Ovary (tissue), 10 donors: ENCODE measurements at regions of chr12 and their contacts with region 1.

Region 1: DNA sequence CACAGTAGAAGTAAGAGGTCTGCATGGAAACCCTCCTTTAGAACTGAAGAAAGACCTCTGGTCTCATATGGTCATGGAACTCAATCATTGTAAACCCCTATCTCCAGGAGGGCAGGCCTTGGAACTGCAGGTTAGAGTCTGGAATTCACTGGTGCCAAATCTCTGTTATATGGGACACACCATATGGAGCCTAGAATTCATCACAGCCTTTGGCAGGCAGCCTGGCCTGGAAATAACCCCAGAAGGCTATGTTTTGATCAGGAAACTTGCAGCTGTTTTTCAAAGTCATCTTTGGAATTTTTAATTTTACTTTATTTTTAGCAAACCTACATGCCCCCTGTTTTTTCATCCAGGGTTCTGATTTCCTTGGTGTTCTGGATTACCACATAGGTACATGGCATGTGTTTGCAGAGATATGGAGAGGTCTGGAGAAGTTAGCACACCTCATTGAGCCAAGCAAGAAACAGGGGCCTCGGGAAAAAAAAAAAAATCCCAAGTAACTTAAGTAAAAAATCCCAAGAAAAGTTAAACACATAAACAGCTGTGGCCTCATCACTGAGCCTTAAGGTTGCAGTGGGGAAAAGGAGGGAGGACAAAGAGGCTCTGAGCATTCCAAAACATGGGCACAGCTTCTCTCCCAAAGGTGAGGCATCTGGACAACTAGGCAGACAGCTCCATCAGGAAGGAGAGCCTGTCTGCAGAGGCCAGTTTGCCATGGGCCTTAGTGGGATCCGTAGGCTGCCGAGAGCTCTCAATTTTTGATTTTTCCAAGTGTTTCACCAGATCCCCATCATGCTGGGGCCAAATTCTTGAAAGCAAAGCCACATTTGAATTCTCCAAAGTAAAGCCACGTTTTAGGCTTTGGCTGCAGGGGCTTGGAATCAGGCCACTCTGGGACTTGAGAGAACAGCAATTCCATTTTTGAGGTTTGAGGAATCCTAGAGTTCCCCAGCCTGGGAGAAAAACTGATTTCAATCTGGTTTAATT is 339.6 kb upstream of the TBX3 start:
- DNase-seq: peak in 3 of 5 donors; percentile 16 to 51 (median 41)
- H3K4me3 ChIP-seq: no peak overlapping the region
- H3K27ac ChIP-seq: no peak overlapping the region
- H3K4me1 ChIP-seq: peaks cover 7% of the 10 kb centered on the region
- H3K27me3 ChIP-seq: no peaks in the 10 kb centered on the region
- CTCF ChIP-seq: no peak
- EP300 ChIP-seq: no peak
- POLR2A ChIP-seq: no peak

Region 2: DNA sequence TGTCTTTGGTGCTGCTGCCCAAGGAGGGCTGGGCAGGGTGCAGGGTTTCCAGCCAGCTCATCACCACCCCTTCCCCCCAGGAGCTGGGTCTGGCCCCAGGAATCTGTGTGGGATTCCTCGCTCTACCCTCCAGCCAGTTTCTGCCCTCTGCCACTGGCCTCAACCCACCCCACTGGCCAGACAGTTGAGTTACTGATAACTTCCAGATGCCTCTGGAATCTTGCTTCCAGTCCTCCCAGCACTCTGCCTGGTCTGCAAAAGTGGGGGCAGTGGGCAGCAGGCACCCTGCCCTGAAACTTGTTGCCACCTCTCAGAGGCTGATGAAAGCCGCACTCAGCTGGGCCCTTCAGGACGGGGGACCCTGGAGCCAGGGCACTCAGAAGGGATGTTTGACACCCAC is 319.5 kb before region 1 on chr12:
- intact Hi-C with region 1: loop called in 1 of 4 experiments (anchors 10 kb)
- DNase-seq: no peak
- H3K4me3 ChIP-seq: no peak overlapping the region
- H3K27ac ChIP-seq: no peak overlapping the region
- H3K4me1 ChIP-seq: no peaks in the 10 kb centered on the region
- H3K27me3 ChIP-seq: no peaks in the 10 kb centered on the region
- CTCF ChIP-seq: no peak
- EP300 ChIP-seq: no peak
- POLR2A ChIP-seq: no peak